Dorsolateral prefrontal cortex (tissue), 120 donors: ENCODE measurements at regions of chr1 and their contacts with region 1.

Region 1: DNA sequence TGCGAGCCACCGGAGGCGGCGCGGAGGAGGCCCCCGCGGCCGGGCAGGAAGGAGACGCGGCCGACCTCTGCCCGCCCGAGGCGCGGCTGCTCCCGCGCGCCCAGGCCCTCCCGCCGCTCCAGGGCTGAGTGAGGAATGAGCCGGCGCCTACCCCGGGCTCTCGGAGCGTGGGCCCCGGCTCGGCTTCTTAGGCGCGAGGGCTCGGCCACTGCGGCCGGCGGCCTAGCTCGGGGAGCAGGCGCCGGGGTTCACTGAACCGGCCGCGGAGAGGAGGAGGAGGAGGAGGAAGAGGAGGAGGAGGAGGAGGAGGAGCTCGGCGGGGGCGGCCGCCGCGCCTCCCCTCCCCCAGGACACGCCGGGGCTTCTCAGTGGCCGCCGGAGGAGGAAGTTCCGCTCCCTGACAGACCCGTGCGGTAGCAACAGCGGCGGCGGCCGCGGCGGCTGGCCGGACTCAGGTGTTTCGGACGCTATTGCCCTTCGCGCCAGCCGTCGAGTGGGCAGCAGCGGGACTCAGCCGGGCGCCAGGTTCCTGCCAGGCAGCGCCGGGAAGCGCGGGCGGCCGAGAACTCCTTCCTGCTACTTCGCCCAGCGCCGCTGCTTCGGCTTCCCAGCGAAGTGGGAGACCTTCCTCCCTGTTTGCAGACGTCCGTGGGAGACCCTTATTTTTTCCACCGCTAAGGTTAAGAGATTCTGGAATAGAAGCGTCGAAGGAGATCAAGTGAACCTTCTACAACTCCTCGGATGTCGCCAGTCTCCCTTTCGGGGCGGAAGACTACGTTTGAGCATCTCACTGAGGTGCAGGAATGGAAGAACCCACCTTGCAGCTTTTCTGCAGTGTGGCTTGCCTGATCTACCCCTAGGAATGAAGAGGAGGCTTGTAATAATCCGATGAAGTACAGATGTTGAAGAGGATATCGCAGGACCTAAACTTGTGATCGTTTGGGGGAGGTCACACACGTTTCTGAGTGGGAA is at the start of gene MAN1A2:
- DNase-seq: peak; percentile 68 to 87 (median 79)
- H3K4me3 ChIP-seq: peak within 1 kb of the TSS; percentile 52 to 96 (median 86)
- H3K27ac ChIP-seq: peak within 1 kb of the TSS; percentile 88 to 100 (median 97)
- H3K27me3 ChIP-seq: no peaks in the 10 kb centered on the region
- CTCF ChIP-seq: peak in 15 of 56 donors; percentile 1 to 35 (median 17)
- total RNA-seq, gene MAN1A2: 62.9 to 127 (median 92.7) TPM

Region 2: DNA sequence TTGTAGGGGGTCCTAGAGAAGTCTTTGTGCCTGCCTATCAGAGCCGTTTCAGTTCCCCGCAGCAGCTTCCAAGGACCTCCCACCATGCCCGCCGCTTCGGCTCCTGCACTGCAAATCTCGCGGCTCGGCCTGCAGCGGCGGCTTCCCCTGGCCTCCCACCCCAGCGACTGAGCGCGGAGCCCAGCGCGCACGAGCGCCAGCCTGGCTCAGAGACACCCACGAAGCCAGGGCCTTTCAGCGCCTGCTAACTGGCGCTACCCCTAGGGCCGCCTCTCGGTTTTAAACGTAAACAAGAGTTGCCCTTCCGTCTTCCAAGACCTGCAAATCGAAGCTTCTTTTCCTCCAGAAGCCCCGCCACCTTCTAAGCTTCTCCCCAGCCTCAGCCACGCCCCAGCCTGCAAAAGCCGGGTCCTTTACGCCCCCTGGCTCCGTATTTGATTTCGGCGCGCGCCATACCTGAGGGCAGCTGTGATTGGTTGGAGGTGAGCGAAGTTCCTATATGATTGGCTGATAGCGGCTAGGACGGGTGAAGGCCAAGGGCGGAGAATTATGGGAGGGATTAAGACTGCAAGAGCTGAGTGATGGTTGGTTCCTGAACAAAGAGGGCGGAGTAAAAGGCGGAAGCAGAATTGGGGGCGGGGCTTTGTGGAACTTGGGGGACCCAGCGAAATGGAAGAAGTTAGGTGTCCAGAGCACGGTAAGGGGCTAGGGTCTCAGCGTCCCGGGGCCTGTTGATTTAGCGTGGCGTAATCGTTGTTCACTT is 307.5 kb before region 1 on chr1 and contains the start of gene TTF2:
- intact Hi-C with region 1: loop called in 1 of 2 experiments (anchors 10 kb)
- DNase-seq: peak; percentile 68 to 94 (median 92)
- H3K4me3 ChIP-seq: peak within 1 kb of the TSS; percentile 65 to 97 (median 84)
- H3K27ac ChIP-seq: peak within 1 kb of the TSS in 15 of 59 donors; percentile 3 to 73 (median 48)
- H3K27me3 ChIP-seq: no peaks in the 10 kb centered on the region
- CTCF ChIP-seq: peak in 47 of 56 donors; percentile 4 to 66 (median 44)
- total RNA-seq, gene TTF2: 6.5 to 31.5 (median 14.0) TPM

Region 3: GRCh38 chr1:117121776-117122697 is 245.3 kb before region 1 on chr1:
- intact Hi-C with region 1: loop called (anchors 2 to 5 kb)
- DNase-seq: peak; percentile 94 to 98 (median 97)
- H3K4me3 ChIP-seq: peak overlapping the region; percentile 51 to 95 (median 78)
- H3K27ac ChIP-seq: peak overlapping the region; percentile 72 to 99 (median 95)
- H3K27me3 ChIP-seq: no peaks in the 10 kb centered on the region
- CTCF ChIP-seq: peak; percentile 51 to 90 (median 78)

Region 4: GRCh38 chr1:117436513-117436912 is 69.2 kb after region 1 on chr1:
- intact Hi-C with region 1: loop called in 1 of 2 experiments (anchors 5 kb)
- DNase-seq: peak in 2 of 10 donors; percentile 24 to 56
- H3K4me3 ChIP-seq: peak overlapping the region in 9 of 59 donors; percentile 1 to 36 (median 7)
- H3K27ac ChIP-seq: peak overlapping the region; percentile 15 to 86 (median 75)
- H3K27me3 ChIP-seq: no peaks in the 10 kb centered on the region
- CTCF ChIP-seq: no peak

Region 5: DNA sequence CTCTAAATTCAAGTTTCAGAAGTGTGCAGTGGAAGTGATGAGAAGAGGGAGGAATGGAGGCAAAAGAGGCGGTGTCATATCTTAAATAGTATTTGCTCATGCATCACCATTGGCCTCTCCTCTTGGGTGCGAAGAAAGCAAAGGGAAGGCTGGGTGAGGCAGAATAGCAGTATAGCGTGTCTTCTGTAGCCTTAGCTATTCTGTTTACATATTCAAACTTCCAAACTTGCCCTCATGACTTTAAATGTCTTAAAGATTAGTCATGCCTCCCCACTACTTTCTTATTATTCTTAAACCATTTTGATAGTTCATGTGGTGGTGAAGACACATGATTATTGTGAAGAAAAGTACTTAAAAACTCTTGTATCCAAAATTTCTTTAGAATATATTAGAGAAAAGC is 133.9 kb after region 1 on chr1:
- intact Hi-C with region 1: loop called in 1 of 2 experiments (anchors 2 kb)
- DNase-seq: no peak
- H3K4me3 ChIP-seq: no peak overlapping the region
- H3K27ac ChIP-seq: no peak overlapping the region
- H3K27me3 ChIP-seq: no peaks in the 10 kb centered on the region
- CTCF ChIP-seq: no peak

Region 6: GRCh38 chr1:117605774-117606648 is 238.7 kb after region 1 on chr1 and contains the start of gene TENT5C:
- intact Hi-C with region 1: loop called (anchors 5 to 10 kb)
- DNase-seq: peak; percentile 85 to 96 (median 93)
- H3K4me3 ChIP-seq: peak within 1 kb of the TSS; percentile 48 to 92 (median 78)
- H3K27ac ChIP-seq: peak within 1 kb of the TSS in 43 of 59 donors; percentile 9 to 86 (median 60)
- H3K27me3 ChIP-seq: no peaks in the 10 kb centered on the region
- CTCF ChIP-seq: peak in 14 of 56 donors; percentile 1 to 32 (median 12)
- total RNA-seq, gene TENT5C: 0.36 to 7.0 (median 1.1) TPM